Testis (tissue), 5 donors: ENCODE measurements at regions of chr20 and their contacts with region 1.

Region 1: GRCh38 chr20:54173653-54174456 is at the start of gene CYP24A1:
- DNase-seq: no peak
- H3K4me3 ChIP-seq: peak within 1 kb of the TSS in 1 of 2 donors; percentile 11
- H3K27ac ChIP-seq: no peak within 1 kb of the TSS
- H3K4me1 ChIP-seq: peaks cover 5% of the 10 kb centered on the region
- H3K27me3 ChIP-seq: no peaks in the 10 kb centered on the region
- CTCF ChIP-seq: no peak
- POLR2A ChIP-seq: no peak
- total RNA-seq, gene CYP24A1: 0.43 to 0.94 TPM

Region 2: DNA sequence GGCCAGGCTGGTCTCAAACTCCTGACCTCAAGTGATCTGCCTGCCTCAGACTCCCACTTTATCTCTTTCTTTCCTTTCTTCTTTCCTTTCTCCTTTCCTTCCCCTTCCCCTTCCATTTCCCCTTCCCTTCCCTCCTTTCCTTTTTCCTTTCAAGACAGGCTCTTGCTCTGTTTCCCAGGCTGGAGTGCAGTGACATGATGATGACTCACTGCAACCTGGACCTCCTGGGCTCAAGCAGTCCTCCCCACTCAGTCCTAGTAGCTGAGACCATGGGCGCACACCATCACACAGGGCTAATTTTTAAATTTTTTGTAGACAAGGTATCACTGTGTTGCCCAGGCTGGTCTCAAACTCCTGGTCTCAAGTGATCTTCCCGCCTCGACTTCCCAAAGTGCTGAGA is 1604.7 kb before region 1 on chr20:
- intact Hi-C with region 1: loop called (anchors 10 kb)
- DNase-seq: no peak
- H3K4me3 ChIP-seq: no peak overlapping the region
- H3K27ac ChIP-seq: no peak overlapping the region
- H3K4me1 ChIP-seq: no peaks in the 10 kb centered on the region
- H3K27me3 ChIP-seq: no peaks in the 10 kb centered on the region
- CTCF ChIP-seq: no peak
- POLR2A ChIP-seq: no peak

Region 3: DNA sequence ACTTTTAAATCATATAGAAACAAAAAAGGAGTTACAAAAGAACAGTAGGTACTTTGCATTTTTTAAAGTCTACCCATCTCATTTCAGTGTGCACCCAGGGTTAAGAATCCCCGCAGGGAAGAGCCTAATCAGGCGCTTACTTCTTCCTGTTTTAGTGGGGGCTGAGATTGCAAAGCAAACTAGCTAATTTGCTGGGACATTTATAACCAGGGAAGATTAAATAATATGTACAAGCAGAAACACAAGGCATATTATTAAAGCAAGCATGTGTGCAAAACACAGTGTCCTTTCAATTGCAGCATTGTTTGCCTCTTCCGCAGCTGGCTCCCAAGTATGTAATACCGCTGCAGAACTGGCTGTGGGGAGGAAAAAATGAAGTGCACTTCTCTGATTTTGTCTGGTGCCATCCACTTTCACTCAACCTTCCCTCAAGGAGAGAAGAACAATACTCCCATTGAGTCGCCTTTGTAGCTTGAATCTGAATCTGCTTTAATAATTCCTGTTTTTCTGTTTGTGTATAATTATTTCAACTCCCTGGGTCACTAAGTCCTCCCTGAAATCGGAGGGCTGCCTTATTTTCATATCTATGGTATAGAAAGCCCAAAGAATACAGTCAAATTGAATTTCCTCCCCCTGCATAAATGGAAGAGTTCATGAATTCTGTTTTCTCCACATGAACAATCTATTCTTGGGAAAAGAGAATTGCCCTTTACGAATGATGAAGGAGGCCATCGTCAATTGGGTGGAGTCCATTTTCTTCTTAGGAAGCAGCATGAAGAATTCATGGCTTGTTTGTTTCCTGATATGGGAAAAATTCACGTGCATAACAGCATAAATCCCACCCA is 80.2 kb before region 1 on chr20:
- intact Hi-C with region 1: no loop called
- DNase-seq: no peak
- H3K4me3 ChIP-seq: no peak overlapping the region
- H3K27ac ChIP-seq: no peak overlapping the region
- H3K4me1 ChIP-seq: no peaks in the 10 kb centered on the region
- H3K27me3 ChIP-seq: no peaks in the 10 kb centered on the region
- CTCF ChIP-seq: no peak
- POLR2A ChIP-seq: no peak

Region 4: DNA sequence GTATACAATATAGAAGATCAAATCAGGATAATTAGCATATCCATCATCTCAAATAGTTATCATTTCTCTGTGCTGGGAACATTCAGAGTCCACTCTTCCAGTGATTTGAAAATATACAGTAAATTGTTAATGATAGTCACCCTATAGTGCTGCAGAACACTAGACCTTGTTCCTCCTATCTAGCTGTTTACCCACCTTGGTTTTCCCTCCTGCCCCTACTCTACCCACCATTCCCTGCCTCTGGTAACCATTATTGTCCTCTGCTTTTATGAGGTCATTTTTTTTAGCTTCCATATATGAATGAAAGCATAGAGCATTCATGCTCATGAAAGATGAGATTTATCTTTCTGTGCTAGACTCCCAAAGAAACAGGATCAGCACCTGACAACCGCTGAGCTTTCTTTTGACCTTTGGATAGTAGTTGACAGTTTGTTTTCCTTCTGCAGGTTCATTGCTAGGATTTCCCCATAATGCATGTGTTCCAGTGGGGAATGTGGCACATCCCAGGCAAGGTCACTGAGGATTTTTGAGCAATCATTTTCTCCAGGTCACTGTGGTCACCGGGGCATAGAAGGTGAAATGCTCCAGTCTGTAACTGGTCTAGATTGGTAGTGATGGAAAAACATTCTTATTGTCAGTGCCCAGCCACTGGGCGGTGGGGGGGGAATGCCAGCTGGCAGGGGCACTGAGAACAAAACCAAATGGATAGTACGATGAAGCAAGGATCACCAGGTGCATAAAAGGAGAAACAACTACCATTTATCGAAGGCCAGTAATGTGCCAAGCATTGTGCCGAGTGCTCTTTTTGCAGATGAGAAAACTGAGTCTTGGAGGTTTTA is 69.9 kb before region 1 on chr20:
- intact Hi-C with region 1: no loop called
- DNase-seq: no peak
- H3K4me3 ChIP-seq: no peak overlapping the region
- H3K27ac ChIP-seq: no peak overlapping the region
- H3K4me1 ChIP-seq: no peaks in the 10 kb centered on the region
- H3K27me3 ChIP-seq: no peaks in the 10 kb centered on the region
- CTCF ChIP-seq: peak in 1 of 3 experiments; percentile 9
- POLR2A ChIP-seq: no peak

Region 5: GRCh38 chr20:54234991-54235658 is 61.3 kb after region 1 on chr20:
- intact Hi-C with region 1: no loop called
- DNase-seq: no peak
- H3K4me3 ChIP-seq: no peak overlapping the region
- H3K27ac ChIP-seq: no peak overlapping the region
- H3K4me1 ChIP-seq: no peaks in the 10 kb centered on the region
- H3K27me3 ChIP-seq: no peaks in the 10 kb centered on the region
- CTCF ChIP-seq: no peak
- POLR2A ChIP-seq: no peak